ENCODE measurements at regions of chr6 and their contacts with region 1.

Region 1: DNA sequence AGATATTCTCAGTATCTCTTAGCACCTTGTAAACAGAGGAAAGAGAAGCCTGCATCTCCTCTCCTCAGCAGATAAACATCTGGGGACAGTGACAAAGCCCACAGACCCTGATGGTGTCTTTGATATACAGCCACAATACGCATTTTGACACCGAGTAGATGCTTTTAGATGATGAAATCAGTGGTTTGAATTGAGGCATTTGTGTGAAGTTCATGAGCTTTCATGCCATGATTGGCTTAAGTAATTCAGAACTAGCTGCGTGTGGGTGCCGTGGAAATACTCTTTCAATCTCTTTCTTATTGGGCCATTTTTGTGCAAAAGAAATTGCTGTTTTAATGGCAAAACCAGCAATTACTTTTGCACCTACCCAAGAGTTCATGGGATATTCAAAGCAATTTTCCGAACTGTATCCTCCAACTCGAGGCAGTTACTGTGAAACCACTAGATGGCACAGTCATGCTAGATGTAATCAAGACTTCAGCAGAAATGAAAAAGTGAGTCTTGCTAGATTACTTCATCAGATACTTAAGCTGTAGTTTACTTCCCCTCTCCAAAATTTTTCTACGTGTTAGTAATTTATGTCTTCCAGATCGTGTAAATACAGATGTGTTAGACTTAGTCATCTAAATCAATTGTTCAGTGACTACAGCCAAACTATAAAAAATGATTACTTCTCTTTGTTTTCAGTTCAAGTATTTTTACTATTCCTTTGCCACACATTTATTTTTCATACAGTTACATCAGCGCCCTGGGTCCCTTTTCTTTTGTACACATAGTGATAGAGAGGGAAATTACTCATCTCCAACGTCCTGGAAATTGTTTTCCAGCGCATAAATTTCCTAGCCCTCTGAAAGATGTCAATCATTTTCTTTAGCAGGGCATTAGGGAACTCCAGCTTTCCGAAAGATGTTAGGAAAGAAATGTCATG is 49.4 kb downstream of the IYD start:
- DNase-seq: peak; percentile 91
- H3K4me3 ChIP-seq: peak overlapping the region in 2 of 3 experiments; percentile 30 to 53
- H3K27ac ChIP-seq: peak overlapping the region; percentile 84
- H3K4me1 ChIP-seq: peaks cover 10% of the 10 kb centered on the region
- H3K27me3 ChIP-seq: no peaks in the 10 kb centered on the region
- CTCF ChIP-seq: peak; percentile 64
- POLR2A ChIP-seq: no peak

Region 2: GRCh38 chr6:150395398-150396009 is 22.7 kb before region 1 on chr6:
- CTCF ChIA-PET with region 1: interaction called, 19 read pairs
- POLR2A ChIA-PET with region 1: no interaction called
- dilution Hi-C with region 1: no loop called
- intact Hi-C with region 1: no loop called
- DNase-seq: peak; percentile 50
- H3K4me3 ChIP-seq: no peak overlapping the region
- H3K27ac ChIP-seq: no peak overlapping the region
- H3K4me1 ChIP-seq: no peaks in the 10 kb centered on the region
- H3K27me3 ChIP-seq: peaks cover 5 to 11% of the 10 kb centered on the region in 2 experiments
- CTCF ChIP-seq: peak; percentile 59 to 70
- POLR2A ChIP-seq: no peak

Region 3: GRCh38 chr6:150617496-150618460 is 199.6 kb after region 1 on chr6:
- CTCF ChIA-PET with region 1: interaction called, 6 read pairs
- POLR2A ChIA-PET with region 1: no interaction called
- dilution Hi-C with region 1: no loop called
- intact Hi-C with region 1: loop called (anchors 2 kb)
- DNase-seq: peak; percentile 67
- H3K4me3 ChIP-seq: peak overlapping the region in 1 of 3 experiments; percentile 10
- H3K27ac ChIP-seq: peak overlapping the region; percentile 21
- H3K4me1 ChIP-seq: peaks cover 38% of the 10 kb centered on the region
- H3K27me3 ChIP-seq: no peaks in the 10 kb centered on the region
- CTCF ChIP-seq: no peak
- POLR2A ChIP-seq: no peak

Region 4: DNA sequence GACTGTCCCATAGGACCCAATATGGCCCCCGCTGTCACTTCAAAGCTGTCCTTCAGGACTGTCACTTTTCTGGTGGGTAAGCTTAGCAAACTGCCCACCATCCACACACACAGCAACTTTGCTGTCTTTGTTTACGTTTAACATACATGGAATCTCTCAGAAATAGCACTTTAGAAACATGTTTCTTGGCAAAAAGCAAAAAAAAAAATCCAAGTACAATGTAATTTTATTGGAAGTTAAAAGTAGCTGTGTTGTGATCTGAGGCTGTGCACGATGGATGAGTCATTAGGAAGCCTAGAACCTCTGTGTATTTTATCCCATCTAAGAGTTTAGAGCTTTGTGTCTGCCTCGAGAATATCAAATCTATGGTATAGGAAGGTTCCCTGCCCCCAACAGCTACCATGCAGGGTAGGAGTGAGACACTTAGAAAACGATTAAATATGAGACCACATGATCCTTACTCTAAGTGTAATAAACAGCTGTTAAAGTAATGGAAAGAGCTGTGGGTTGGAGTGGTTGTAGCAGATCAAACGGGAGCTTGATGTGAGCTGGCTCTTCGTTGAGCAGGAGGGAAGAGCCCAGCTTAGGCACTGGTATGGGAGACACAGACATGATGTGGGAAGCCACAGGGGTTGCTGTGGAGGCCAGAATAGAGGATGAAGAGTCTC is 301.1 kb after region 1 on chr6:
- CTCF ChIA-PET with region 1: interaction called, 10 read pairs
- POLR2A ChIA-PET with region 1: no interaction called
- dilution Hi-C with region 1: no loop called
- intact Hi-C with region 1: no loop called
- DNase-seq: no peak
- H3K4me3 ChIP-seq: no peak overlapping the region
- H3K27ac ChIP-seq: no peak overlapping the region
- H3K4me1 ChIP-seq: no peaks in the 10 kb centered on the region
- H3K27me3 ChIP-seq: no peaks in the 10 kb centered on the region
- CTCF ChIP-seq: no peak
- POLR2A ChIP-seq: no peak

Region 5: GRCh38 chr6:150813319-150813992 is 395.3 kb after region 1 on chr6:
- CTCF ChIA-PET with region 1: interaction called, 266 read pairs
- POLR2A ChIA-PET with region 1: interaction called, 3 read pairs
- dilution Hi-C with region 1: no loop called
- intact Hi-C with region 1: loop called (anchors 1 kb)
- DNase-seq: no peak
- H3K4me3 ChIP-seq: no peak overlapping the region
- H3K27ac ChIP-seq: peak overlapping the region; percentile 12
- H3K4me1 ChIP-seq: peaks cover 10% of the 10 kb centered on the region
- H3K27me3 ChIP-seq: no peaks in the 10 kb centered on the region
- CTCF ChIP-seq: no peak
- POLR2A ChIP-seq: no peak

Region 6: GRCh38 chr6:150865406-150866146 is 447.4 kb after region 1 on chr6 and contains the start of gene MTHFD1L:
- CTCF ChIA-PET with region 1: interaction called, 4 read pairs
- POLR2A ChIA-PET with region 1: interaction called, 3 read pairs
- dilution Hi-C with region 1: no loop called
- intact Hi-C with region 1: loop called (anchors 1 kb)
- DNase-seq: peak; percentile 86
- H3K4me3 ChIP-seq: peak within 1 kb of the TSS; percentile 90 to 93 (median 92)
- H3K27ac ChIP-seq: peak within 1 kb of the TSS; percentile 93
- H3K4me1 ChIP-seq: peaks cover 25% of the 10 kb centered on the region
- H3K27me3 ChIP-seq: no peaks in the 10 kb centered on the region
- CTCF ChIP-seq: peak; percentile 58 to 62
- POLR2A ChIP-seq: peak; percentile 60
- total RNA-seq, gene MTHFD1L: 120 and 121 TPM in 2 replicates

Region 7: GRCh38 chr6:151330134-151330696 is 912.1 kb after region 1 on chr6:
- CTCF ChIA-PET with region 1: no interaction called
- POLR2A ChIA-PET with region 1: no interaction called
- dilution Hi-C with region 1: no loop called
- intact Hi-C with region 1: loop called (anchors 10 kb)
- DNase-seq: no peak
- H3K4me3 ChIP-seq: no peak overlapping the region
- H3K27ac ChIP-seq: no peak overlapping the region
- H3K4me1 ChIP-seq: peaks cover 9% of the 10 kb centered on the region
- H3K27me3 ChIP-seq: no peaks in the 10 kb centered on the region
- CTCF ChIP-seq: no peak
- POLR2A ChIP-seq: no peak